PC-3 (cell line): ENCODE measurements at regions of chr3 and their contacts with region 1.

Region 1: DNA sequence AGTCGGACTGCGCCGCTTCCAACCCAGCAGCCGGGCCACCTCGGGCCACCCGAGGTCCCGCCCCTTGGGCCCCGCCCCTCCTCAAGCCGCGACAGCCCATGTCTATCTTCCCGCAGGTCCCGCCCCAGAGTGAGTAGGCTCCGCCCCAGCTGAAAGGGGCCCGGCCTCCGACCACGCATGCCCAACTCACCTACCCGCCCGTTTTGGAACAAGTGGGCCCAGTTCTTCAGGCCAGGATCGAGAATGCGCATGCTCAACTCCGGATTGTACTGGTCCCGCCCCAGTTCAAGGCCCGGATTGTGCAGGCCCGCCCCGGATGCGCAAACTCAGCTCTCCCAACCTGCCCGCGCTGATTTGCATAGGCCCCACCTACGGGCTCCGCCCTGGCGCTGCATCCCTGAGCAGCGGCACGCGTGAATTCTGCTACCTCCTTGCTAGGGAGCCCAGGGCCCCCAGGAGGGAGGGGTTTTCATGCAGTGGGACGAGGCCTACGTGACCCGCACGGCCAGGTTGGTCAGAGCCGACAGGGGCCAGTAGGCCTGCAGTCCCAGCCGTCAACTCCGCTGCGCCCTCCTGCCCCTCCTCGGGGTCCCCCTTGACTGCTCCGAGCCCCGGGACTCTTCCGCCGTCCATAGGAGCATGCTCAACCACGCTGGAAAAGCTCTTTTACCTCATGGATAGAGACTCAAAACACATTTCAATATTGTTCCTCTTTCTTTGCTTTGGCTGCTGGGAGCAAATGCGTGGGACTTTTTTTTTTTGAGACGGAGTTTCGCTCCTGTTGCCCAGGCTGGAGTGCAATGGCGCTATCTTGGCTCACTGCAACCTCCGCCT is at the start of gene PFKFB4:
- DNase-seq: peak; percentile 99
- ATAC-seq: peak; percentile 87
- H3K4me3 ChIP-seq: peak within 1 kb of the TSS; percentile 86
- H3K27ac ChIP-seq: peak within 1 kb of the TSS; percentile 9; the same call in 1 of the 2 replicates
- H3K4me1 ChIP-seq: peaks cover 31% of the 10 kb centered on the region
- H3K27me3 ChIP-seq: no peaks in the 10 kb centered on the region
- CTCF ChIP-seq: no peak
- total RNA-seq, gene PFKFB4: 33.5 and 35.2 TPM in 2 replicates

Region 2: GRCh38 chr3:47380601-47381316 is 1176.3 kb before region 1 on chr3 and contains the start of gene PTPN23:
- CTCF ChIA-PET with region 1: no interaction called
- POLR2A ChIA-PET with region 1: no interaction called
- intact Hi-C with region 1: loop called (anchors 10 kb)
- DNase-seq: peak; percentile 99
- ATAC-seq: peak; percentile 79
- H3K4me3 ChIP-seq: peak within 1 kb of the TSS; percentile 77
- H3K27ac ChIP-seq: peak within 1 kb of the TSS; percentile 86
- H3K4me1 ChIP-seq: peaks cover 31% of the 10 kb centered on the region
- H3K27me3 ChIP-seq: no peaks in the 10 kb centered on the region
- CTCF ChIP-seq: no peak
- total RNA-seq, gene PTPN23: 22.3 and 28.7 TPM in 2 replicates

Region 3: GRCh38 chr3:48472915-48473616 is 83.9 kb before region 1 on chr3:
- CTCF ChIA-PET with region 1: interaction called, 4 read pairs
- POLR2A ChIA-PET with region 1: interaction called, 10 read pairs
- intact Hi-C with region 1: no loop called
- DNase-seq: peak; percentile 90
- ATAC-seq: peak; percentile 84
- H3K4me3 ChIP-seq: peak overlapping the region; percentile 79
- H3K27ac ChIP-seq: peak overlapping the region; percentile 92
- H3K4me1 ChIP-seq: peaks cover 20% of the 10 kb centered on the region
- H3K27me3 ChIP-seq: no peaks in the 10 kb centered on the region
- CTCF ChIP-seq: peak; percentile 59

Region 4: DNA sequence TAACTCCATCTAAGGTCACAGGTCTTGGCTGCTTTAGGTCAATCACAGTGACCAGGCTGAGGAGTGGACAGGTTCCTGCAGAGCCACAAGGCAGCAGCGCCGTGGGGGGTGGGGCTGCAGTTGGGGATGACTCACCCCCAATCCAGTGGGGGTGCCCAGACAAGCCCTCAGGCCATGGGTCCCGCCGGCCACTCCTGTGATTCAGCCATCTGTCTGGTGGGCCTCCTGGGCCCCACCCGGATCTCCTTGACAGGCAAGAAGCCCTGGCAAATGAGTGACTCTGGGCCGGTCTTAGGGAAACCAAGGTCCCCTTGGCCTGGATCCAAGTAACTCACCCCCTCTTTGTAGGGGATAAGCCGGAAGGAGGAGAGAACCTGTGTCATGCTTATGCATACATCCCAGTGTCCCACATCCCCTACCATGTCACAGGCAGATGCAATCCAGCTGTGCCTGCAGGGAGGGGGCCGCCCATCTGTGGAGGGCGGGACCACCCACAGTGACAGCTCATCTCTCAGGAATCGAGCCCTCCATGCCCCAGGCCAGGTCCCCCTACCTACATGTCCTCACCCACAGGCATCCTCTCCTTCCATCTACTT is 38.6 kb after region 1 on chr3:
- CTCF ChIA-PET with region 1: interaction called, 6 read pairs
- POLR2A ChIA-PET with region 1: interaction called, 4 read pairs
- intact Hi-C with region 1: loop called (anchors 5 kb)
- DNase-seq: peak; percentile 95
- ATAC-seq: peak; percentile 43
- H3K4me3 ChIP-seq: no peak overlapping the region
- H3K27ac ChIP-seq: peak overlapping the region; percentile 74
- H3K4me1 ChIP-seq: peaks cover 60% of the 10 kb centered on the region
- H3K27me3 ChIP-seq: no peaks in the 10 kb centered on the region
- CTCF ChIP-seq: no peak

Region 5: DNA sequence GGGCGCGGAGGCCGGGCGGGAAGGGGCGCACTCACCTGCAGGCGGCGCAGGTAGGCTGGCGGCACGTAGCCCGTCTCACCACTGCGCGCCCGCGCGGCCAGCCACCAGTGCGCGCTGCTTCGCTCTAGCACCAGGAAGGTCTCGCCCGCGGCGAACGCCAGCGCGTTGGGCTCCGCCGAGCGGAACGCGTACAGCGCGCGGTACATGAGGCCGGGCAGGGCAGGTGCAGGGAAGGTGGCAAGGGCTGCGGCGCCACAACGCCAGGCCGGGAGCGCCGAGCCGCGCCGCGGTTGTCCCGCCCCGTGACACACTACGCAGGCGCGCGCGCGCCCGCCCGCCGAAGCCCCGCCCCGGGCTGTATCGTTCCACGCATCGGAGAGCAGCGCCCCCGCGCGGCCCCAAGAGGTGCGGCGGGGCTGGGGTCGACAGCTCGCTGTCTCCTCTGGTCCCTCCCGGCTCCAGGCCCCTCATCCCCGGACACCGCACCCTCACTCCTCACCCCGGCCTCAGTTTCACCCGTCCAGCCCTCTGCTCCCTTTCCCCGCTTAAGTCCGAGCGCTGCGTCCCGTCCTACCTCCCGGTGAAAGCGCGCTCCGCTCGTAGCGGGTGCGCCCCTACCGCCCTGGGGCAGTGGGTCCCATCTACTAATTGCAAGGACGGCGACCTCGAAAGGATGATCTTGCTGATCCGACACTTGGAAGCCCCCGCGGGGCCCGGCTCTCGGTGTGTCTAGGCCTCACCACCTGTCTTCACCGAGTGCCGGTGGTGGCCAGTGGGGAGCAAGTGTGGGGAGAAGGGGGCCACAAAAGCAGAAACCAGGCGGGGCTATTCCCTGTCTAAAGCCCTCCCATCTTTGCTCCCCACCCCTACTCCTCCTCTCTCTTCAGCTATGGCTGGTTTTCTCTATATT is 128.8 kb after region 1 on chr3 and contains the start of gene NCKIPSD:
- CTCF ChIA-PET with region 1: interaction called, 3 read pairs
- POLR2A ChIA-PET with region 1: no interaction called
- intact Hi-C with region 1: loop called (anchors 5 kb)
- DNase-seq: peak; percentile 92
- ATAC-seq: peak; percentile 81
- H3K4me3 ChIP-seq: peak within 1 kb of the TSS; percentile 90
- H3K27ac ChIP-seq: peak within 1 kb of the TSS; percentile 51
- H3K4me1 ChIP-seq: peaks cover 20% of the 10 kb centered on the region
- H3K27me3 ChIP-seq: no peaks in the 10 kb centered on the region
- CTCF ChIP-seq: peak; percentile 79
- total RNA-seq, gene NCKIPSD: 56.3 and 66.8 TPM in 2 replicates